Adrenal gland (tissue), 19 donors: ENCODE measurements at regions of chr5 and their contacts with region 1.

Region 1: GRCh38 chr5:90585337-90585986 is 26.9 kb downstream of the ADGRV1 start:
- DNase-seq: no peak
- H3K4me3 ChIP-seq: no peak overlapping the region
- H3K27ac ChIP-seq: no peak overlapping the region
- H3K4me1 ChIP-seq: no peaks in the 10 kb centered on the region
- H3K27me3 ChIP-seq: peaks cover 3% of the 10 kb centered on the region
- CTCF ChIP-seq: no peak
- POLR2A ChIP-seq: no peak

Region 2: GRCh38 chr5:90293931-90294330 is 291.5 kb before region 1 on chr5:
- intact Hi-C with region 1: loop called in 1 of 2 experiments (anchors 5 kb)
- DNase-seq: no peak
- H3K4me3 ChIP-seq: no peak overlapping the region
- H3K27ac ChIP-seq: no peak overlapping the region
- H3K4me1 ChIP-seq: no peaks in the 10 kb centered on the region
- H3K27me3 ChIP-seq: no peaks in the 10 kb centered on the region
- CTCF ChIP-seq: no peak
- POLR2A ChIP-seq: no peak

Region 3: DNA sequence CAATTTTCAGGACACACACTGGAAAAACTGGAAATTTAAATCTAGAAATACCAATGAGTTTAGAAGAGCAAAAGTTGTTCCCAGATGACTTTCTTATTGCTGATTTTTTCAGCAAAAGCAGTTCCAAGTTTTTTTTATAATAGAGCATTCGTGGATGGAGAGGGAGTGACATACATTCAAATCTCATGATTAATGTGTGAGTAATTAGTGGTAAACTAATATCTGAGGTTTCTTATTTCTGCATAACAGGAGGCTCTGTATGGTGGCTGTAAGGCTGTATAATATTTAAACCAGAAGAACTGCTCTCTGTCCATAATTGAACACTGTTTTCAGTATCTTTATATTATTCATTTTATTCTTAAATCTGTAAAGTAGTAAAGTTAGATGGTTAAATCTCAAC is 81.9 kb before region 1 on chr5:
- intact Hi-C with region 1: loop called in 1 of 2 experiments (anchors 5 kb)
- DNase-seq: no peak
- H3K4me3 ChIP-seq: no peak overlapping the region
- H3K27ac ChIP-seq: no peak overlapping the region
- H3K4me1 ChIP-seq: no peaks in the 10 kb centered on the region
- H3K27me3 ChIP-seq: no peaks in the 10 kb centered on the region
- CTCF ChIP-seq: no peak
- POLR2A ChIP-seq: no peak

Region 4: GRCh38 chr5:90528601-90529193 is 56.8 kb before region 1 on chr5:
- intact Hi-C with region 1: no loop called
- DNase-seq: peak in 4 of 7 donors; percentile 7 to 22 (median 16)
- H3K4me3 ChIP-seq: peak overlapping the region; percentile 70 to 96 (median 76)
- H3K27ac ChIP-seq: peak overlapping the region; percentile 17 to 94 (median 91)
- H3K4me1 ChIP-seq: peaks cover 5 to 39% of the 10 kb centered on the region in 2 donors
- H3K27me3 ChIP-seq: no peaks in the 10 kb centered on the region
- CTCF ChIP-seq: no peak
- POLR2A ChIP-seq: no peak